RWPE1 (cell line): ENCODE measurements at regions of chr12 and their contacts with region 1.

Region 1: DNA sequence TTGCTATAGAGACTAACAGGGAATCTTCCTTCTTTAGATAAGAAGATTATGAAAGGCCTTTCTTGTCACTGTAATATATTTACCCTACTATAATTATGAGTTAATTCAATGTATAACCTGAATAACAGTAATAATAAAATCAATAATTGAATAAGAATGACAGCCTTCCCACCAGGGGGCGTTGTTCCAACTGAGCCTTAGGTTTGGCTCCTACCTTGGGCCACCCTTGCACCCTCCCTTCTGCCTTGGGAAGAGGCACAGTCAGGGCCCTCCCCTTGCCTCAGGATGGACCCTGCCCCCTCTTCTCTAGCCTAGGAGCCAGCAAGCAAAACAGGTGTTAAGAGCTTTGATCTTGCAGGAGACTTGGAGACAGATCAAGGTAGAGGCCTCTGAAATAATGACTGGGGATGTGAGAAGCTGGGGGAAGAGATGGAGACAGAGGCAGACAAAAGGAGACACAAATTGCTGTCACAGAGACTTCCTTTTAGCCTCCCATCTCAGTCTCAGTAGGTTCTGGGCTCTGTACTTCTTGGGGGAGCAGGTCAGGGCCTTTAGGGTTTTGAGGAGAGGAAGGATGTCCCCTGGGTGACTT is 40.1 kb upstream of the CISTR start:
- DNase-seq: no peak
- H3K27ac ChIP-seq: no peak overlapping the region
- CTCF ChIP-seq: peak; percentile 37

Region 2: GRCh38 chr12:53949631-53950439 is 158.0 kb after region 1 on chr12:
- CTCF ChIA-PET with region 1: interaction called, 13 read pairs
- POLR2A ChIA-PET with region 1: no interaction called
- DNase-seq: no peak
- H3K27ac ChIP-seq: no peak overlapping the region
- CTCF ChIP-seq: no peak